PC-3 (cell line): ENCODE measurements at regions of chr16 and their contacts with region 1.

Region 1: DNA sequence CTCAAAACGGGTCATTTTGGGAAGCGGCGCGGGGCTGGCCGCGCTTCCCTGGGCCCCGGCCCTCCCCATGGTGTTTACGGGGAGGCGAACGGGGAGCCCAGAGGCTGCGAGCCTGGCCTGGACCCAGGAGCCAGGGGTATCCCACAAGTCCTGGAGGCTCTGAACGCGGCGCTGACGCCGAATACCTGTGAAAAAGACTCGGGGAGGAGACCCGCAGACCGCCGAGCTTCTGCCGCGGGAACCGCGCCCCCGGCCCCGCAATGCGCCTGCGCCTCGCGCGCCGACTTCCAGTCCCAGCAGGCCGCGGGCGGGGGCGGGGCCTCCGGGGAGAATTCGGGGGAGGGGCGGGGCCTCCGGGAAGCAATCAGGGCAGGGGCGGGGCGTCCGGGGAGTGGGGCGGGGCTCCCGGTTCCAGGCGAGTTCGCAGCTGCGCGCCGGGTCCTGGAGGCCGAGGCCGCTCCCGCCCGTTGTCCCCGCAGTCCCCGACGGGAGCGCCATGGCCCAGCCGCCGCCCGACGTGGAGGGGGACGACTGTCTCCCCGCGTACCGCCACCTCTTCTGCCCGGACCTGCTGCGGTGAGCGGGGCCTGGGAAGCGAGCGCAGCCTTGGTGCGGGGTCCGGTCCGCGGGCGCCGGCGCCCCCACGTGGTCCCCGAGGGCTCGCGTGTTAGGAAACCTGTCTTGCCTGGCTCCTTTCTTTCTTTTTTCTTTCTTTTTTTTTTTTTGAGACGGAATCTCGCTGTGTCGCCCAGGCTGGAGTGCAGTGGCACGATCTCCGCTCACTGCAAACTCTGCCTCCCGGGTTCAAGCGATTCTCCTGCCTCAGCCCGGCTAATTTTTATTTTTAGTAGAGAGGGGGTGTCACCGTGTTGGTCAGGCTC is at the start of gene DECR2:
- DNase-seq: peak; percentile 80
- ATAC-seq: peak; percentile 70
- H3K4me3 ChIP-seq: peak within 1 kb of the TSS; percentile 74
- H3K27ac ChIP-seq: peak within 1 kb of the TSS; percentile 61
- H3K4me1 ChIP-seq: peaks cover 6% of the 10 kb centered on the region
- H3K27me3 ChIP-seq: no peaks in the 10 kb centered on the region
- CTCF ChIP-seq: peak; percentile 44; the same call in 1 of the 2 replicates
- total RNA-seq, gene DECR2: 19.8 and 22.3 TPM in 2 replicates

Region 2: GRCh38 chr16:425082-425718 is 23.5 kb after region 1 on chr16 and contains the start of gene RAB11FIP3:
- CTCF ChIA-PET with region 1: no interaction called
- POLR2A ChIA-PET with region 1: interaction called, 7 read pairs
- intact Hi-C with region 1: loop called (anchors 2 kb)
- DNase-seq: peak; percentile 61
- ATAC-seq: peak; percentile 71
- H3K4me3 ChIP-seq: peak within 1 kb of the TSS; percentile 80
- H3K27ac ChIP-seq: no peak within 1 kb of the TSS
- H3K4me1 ChIP-seq: peaks cover 23% of the 10 kb centered on the region
- H3K27me3 ChIP-seq: no peaks in the 10 kb centered on the region
- CTCF ChIP-seq: peak; percentile 29; the same call in 1 of the 2 replicates
- total RNA-seq, gene RAB11FIP3: 12.7 and 17.9 TPM in 2 replicates

Region 3: GRCh38 chr16:456891-457483 is 55.3 kb after region 1 on chr16:
- CTCF ChIA-PET with region 1: no interaction called
- POLR2A ChIA-PET with region 1: no interaction called
- intact Hi-C with region 1: no loop called
- DNase-seq: no peak
- ATAC-seq: 0 out of 2 replicates have a peak, but pooled peaks have one; percentile 18
- H3K4me3 ChIP-seq: no peak overlapping the region
- H3K27ac ChIP-seq: no peak overlapping the region
- H3K4me1 ChIP-seq: no peaks in the 10 kb centered on the region
- H3K27me3 ChIP-seq: no peaks in the 10 kb centered on the region
- CTCF ChIP-seq: no peak